ENCODE measurements at regions of chr20 and their contacts with region 1.

Region 1: GRCh38 chr20:18793625-18794427 is 19.8 kb upstream of the SCP2D1 start:
- DNase-seq: peak; percentile 78 to 98 (median 88)
- ATAC-seq: peak; percentile 93
- H3K4me3 ChIP-seq: peak overlapping the region; percentile 73 to 79
- H3K4me3 Mint-ChIP-seq: peak overlapping the region; percentile 96
- H3K27ac ChIP-seq: peak overlapping the region; percentile 94 to 95
- H3K27ac Mint-ChIP-seq: peak overlapping the region; percentile 100
- H3K4me1 ChIP-seq: peaks cover 12% of the 10 kb centered on the region
- H3K4me1 Mint-ChIP-seq: peaks cover 17% of the 10 kb centered on the region
- H3K27me3 ChIP-seq: no peaks in the 10 kb centered on the region
- H3K27me3 Mint-ChIP-seq: peaks cover 19% of the 10 kb centered on the region
- CTCF ChIP-seq: no peak

Region 2: DNA sequence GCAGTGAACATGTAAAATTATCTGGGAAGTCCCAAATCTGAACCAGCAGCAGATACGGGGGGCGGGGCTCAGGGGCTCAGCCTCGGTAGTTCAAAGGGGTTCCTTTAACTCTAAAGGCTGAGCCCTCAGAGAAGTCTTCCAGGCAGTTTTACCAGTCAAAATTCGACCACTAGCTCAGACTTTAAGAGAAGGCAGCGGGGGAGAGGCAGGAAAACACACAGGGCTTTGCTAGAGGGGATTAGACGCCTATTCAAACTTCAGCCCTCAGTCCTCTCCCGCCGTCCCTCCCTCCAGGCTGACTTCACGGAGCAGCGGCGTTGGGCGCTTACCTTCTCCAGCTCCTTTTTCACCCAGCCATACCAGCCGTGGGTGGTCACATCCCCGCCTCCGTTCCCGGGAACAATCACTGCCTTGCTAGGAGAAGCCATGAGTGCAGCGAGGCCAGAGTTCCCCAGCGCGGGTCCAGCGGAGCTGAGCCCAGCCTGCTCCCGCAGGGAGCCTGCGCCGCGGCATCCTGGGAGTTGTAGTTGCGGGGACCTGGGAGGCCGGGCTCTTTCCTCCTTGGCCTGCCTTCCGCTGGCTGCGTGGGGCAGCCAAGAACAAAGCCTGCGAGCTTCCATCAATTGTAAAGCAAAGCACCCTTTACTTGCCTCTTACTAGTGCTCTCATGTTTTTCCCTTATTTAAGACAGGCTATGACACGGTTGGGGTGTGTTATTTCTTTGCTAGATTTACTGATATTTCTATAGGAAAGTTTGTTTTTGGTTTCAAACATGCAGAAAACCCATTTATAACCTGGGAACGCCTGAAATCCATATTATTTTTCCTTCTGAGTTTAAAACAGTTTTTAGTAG is 296.9 kb before region 1 on chr20 and contains the start of gene RBBP9:
- CTCF ChIA-PET with region 1: no interaction called
- POLR2A ChIA-PET with region 1: interaction called, 4 read pairs
- intact Hi-C with region 1: loop called in 1 of 2 experiments (anchors 2 kb)
- DNase-seq: peak; percentile 31 to 86 (median 75)
- ATAC-seq: peak; percentile 98
- H3K4me3 ChIP-seq: peak within 1 kb of the TSS; percentile 77 to 93
- H3K4me3 Mint-ChIP-seq: peak within 1 kb of the TSS; percentile 96
- H3K27ac ChIP-seq: peak within 1 kb of the TSS; percentile 50 to 62
- H3K27ac Mint-ChIP-seq: peak within 1 kb of the TSS; percentile 90
- H3K4me1 ChIP-seq: peaks cover 16% of the 10 kb centered on the region
- H3K4me1 Mint-ChIP-seq: peaks cover 20% of the 10 kb centered on the region
- H3K27me3 ChIP-seq: no peaks in the 10 kb centered on the region
- H3K27me3 Mint-ChIP-seq: no peaks in the 10 kb centered on the region
- CTCF ChIP-seq: no peak
- total RNA-seq, gene RBBP9: 2.1 to 2.3 TPM

Region 3: GRCh38 chr20:18566892-18567742 is 226.7 kb before region 1 on chr20 and contains the start of gene SMIM26:
- CTCF ChIA-PET with region 1: no interaction called
- POLR2A ChIA-PET with region 1: interaction called, 3 read pairs
- intact Hi-C with region 1: loop called (anchors 1 kb)
- DNase-seq: peak; percentile 88 to 97 (median 95)
- ATAC-seq: peak; percentile 98
- H3K4me3 ChIP-seq: peak within 1 kb of the TSS; percentile 54 to 90
- H3K4me3 Mint-ChIP-seq: peak within 1 kb of the TSS; percentile 96
- H3K27ac ChIP-seq: peak within 1 kb of the TSS; percentile 79 to 94
- H3K27ac Mint-ChIP-seq: peak within 1 kb of the TSS; percentile 99
- H3K4me1 ChIP-seq: peaks cover 14% of the 10 kb centered on the region
- H3K4me1 Mint-ChIP-seq: peaks cover 22% of the 10 kb centered on the region
- H3K27me3 ChIP-seq: no peaks in the 10 kb centered on the region
- H3K27me3 Mint-ChIP-seq: no peaks in the 10 kb centered on the region
- CTCF ChIP-seq: no peak
- total RNA-seq, gene SMIM26: 63.9 to 64.8 TPM

Region 4: DNA sequence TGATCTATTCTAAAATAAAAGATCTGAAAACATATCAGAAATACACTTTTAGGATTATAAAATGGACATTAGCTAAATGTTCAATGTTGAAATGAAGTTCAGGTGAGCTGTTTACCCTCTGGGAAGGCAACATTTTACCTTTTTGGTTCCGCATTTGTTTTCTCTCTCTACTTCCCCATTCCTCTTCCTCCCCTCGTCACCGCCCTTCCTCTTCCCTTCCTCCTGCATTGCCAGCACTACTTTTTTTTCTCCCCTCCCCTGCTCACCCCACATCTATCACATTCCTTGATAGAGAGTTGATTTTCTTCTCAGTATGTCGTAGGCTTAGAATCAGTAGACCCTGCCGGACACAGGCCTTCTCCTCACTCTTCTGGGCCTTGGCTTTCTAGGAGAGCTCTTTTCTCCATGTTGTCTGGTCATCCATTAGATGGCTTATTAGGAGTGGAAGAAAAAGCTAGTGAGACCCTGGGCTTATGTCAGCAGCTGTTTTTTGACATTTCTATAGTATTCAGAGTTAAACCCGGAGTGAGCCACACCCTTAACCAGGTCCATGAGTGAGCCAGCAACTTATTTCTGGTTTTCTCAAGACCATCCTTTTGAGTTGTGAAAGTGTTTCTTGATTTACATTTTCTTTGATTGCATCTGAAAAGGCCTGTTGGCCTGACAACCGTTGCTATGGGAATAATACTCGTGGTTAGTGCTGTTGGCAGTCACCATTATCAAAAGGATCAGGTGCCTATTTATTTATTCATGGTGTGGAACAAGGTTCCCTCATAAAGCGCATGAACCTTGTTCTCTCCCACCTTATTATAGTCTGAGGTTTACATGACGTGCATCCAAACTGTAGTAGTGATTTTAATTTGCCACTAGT is 115.0 kb before region 1 on chr20:
- CTCF ChIA-PET with region 1: no interaction called
- POLR2A ChIA-PET with region 1: no interaction called
- intact Hi-C with region 1: no loop called
- DNase-seq: peak in 1 of 9 experiments; percentile 16
- ATAC-seq: no peak
- H3K4me3 ChIP-seq: no peak overlapping the region
- H3K4me3 Mint-ChIP-seq: no peak overlapping the region
- H3K27ac ChIP-seq: no peak overlapping the region
- H3K27ac Mint-ChIP-seq: peak overlapping the region; percentile 62
- H3K4me1 ChIP-seq: no peaks in the 10 kb centered on the region
- H3K4me1 Mint-ChIP-seq: peaks cover 20% of the 10 kb centered on the region
- H3K27me3 ChIP-seq: no peaks in the 10 kb centered on the region
- H3K27me3 Mint-ChIP-seq: no peaks in the 10 kb centered on the region
- CTCF ChIP-seq: no peak

Region 5: GRCh38 chr20:20017001-20017843 is 1223.4 kb after region 1 on chr20 and contains the start of gene NAA20:
- CTCF ChIA-PET with region 1: no interaction called
- POLR2A ChIA-PET with region 1: no interaction called
- intact Hi-C with region 1: loop called in 1 of 2 experiments (anchors 10 kb)
- DNase-seq: peak; percentile 75 to 94 (median 91)
- ATAC-seq: peak; percentile 94
- H3K4me3 ChIP-seq: peak within 1 kb of the TSS; percentile 77 to 89
- H3K4me3 Mint-ChIP-seq: peak within 1 kb of the TSS; percentile 91
- H3K27ac ChIP-seq: peak within 1 kb of the TSS; percentile 63 to 82
- H3K27ac Mint-ChIP-seq: peak within 1 kb of the TSS; percentile 91
- H3K4me1 ChIP-seq: peaks cover 44% of the 10 kb centered on the region
- H3K4me1 Mint-ChIP-seq: peaks cover 53% of the 10 kb centered on the region
- H3K27me3 ChIP-seq: no peaks in the 10 kb centered on the region
- H3K27me3 Mint-ChIP-seq: no peaks in the 10 kb centered on the region
- CTCF ChIP-seq: peak; percentile 58
- total RNA-seq, gene NAA20: 32.9 to 33.2 TPM

Region 6: DNA sequence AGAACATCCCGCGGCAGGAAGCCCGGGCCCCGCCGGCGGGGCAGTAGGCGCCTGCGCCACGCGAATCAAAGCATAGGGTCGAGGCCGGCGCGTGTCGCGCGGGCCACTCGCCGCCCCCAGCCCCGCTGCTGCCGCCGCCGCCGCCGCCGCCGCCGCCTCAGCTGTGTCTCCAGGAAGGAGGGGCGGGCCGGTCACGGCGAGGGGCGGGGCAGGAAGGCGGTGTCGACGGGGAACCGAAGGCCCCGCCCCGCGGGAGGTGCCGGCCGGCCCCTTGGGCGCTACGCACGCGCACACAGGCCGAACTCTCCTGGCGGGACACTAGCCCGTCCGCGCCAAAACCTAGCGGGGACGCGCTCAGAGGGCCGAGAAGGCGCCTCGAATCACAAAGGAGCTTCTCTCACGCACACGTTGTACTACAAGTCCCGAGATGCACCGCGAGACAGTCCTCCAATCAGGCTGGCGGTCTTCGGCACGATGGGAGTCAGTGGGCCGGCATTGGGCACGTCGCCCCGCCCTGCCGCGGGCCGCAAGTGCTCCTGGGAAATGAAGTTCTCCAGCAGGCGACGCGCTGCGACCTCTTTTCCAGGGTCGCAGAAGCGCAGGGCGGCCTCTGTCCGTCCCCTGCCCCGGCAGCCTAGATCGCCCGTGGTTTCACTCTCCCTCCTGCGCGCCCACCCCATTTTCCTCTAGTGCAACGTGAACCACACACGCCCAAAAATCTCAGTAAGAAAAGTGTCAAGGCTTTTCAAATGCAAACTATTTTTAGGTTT is 1918.8 kb after region 1 on chr20 and contains the start of gene RALGAPA2:
- CTCF ChIA-PET with region 1: no interaction called
- POLR2A ChIA-PET with region 1: no interaction called
- intact Hi-C with region 1: loop called in 1 of 2 experiments (anchors 10 kb)
- DNase-seq: peak; percentile 87 to 97 (median 94)
- ATAC-seq: peak; percentile 95
- H3K4me3 ChIP-seq: peak within 1 kb of the TSS; percentile 66 to 89
- H3K4me3 Mint-ChIP-seq: peak within 1 kb of the TSS; percentile 98
- H3K27ac ChIP-seq: peak within 1 kb of the TSS; percentile 59 to 93
- H3K27ac Mint-ChIP-seq: peak within 1 kb of the TSS; percentile 97
- H3K4me1 ChIP-seq: peaks cover 14% of the 10 kb centered on the region
- H3K4me1 Mint-ChIP-seq: peaks cover 30% of the 10 kb centered on the region
- H3K27me3 ChIP-seq: no peaks in the 10 kb centered on the region
- H3K27me3 Mint-ChIP-seq: peaks cover 2% of the 10 kb centered on the region
- CTCF ChIP-seq: no peak
- total RNA-seq, gene RALGAPA2: 15.4 to 17.5 TPM

Measured in CD8-positive, alpha-beta T cell (primary cell).